Aorta (tissue), 5 donors: ENCODE measurements at regions of chr7 and their contacts with region 1.

Region 1: DNA sequence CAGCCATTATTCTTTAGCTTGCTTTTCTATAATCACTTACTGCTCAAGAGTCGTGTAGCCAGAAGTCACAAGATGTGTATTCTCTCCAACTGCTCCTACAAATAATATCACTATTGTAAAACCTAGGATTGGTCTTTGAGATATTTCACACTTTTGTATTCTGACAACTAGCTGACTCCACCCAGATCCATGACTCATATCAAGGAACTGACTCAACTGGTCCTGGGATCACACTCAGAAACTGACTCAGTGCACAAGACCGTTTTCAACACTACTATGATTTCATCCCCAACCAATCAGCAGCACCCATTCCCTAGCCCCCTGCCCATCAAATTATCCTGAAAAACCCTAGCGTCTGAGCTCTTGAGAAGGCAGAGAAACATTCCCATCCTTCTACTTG is 56.5 kb upstream of the ORC5 start:
- DNase-seq: no peak
- ATAC-seq: no peak
- H3K4me3 ChIP-seq: no peak overlapping the region
- H3K27ac ChIP-seq: no peak overlapping the region
- H3K4me1 ChIP-seq: no peaks in the 10 kb centered on the region
- H3K27me3 ChIP-seq: no peaks in the 10 kb centered on the region

Region 2: GRCh38 chr7:104045183-104045582 is 219.1 kb before region 1 on chr7:
- intact Hi-C with region 1: no loop called
- DNase-seq: no peak
- ATAC-seq: no peak
- H3K4me3 ChIP-seq: no peak overlapping the region
- H3K27ac ChIP-seq: no peak overlapping the region
- H3K4me1 ChIP-seq: no peaks in the 10 kb centered on the region
- H3K27me3 ChIP-seq: no peaks in the 10 kb centered on the region

Region 3: DNA sequence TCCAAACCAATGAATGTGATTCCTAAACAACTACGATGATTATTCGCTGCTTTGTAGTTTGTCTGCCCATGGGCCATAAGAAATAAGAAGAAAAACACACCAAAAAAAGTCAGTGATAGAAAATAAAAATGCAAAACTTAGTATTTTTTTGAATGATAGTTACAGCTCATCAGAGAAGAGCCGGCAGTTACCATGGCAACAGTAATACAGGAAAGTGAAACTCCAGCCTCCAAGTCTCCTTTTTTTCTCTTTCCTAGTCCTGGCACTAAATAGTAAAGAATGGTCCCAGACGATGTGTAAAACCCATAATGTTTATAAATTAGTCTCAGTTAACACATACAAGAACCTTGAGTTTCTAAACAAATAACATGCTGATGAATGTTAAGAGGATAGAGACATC is 42.5 kb after region 1 on chr7:
- intact Hi-C with region 1: loop called in 1 of 2 experiments (anchors 5 kb)
- DNase-seq: no peak
- ATAC-seq: no peak
- H3K4me3 ChIP-seq: no peak overlapping the region
- H3K27ac ChIP-seq: no peak overlapping the region
- H3K4me1 ChIP-seq: no peaks in the 10 kb centered on the region
- H3K27me3 ChIP-seq: no peaks in the 10 kb centered on the region

Region 4: GRCh38 chr7:104469166-104469820 is 205.0 kb after region 1 on chr7:
- intact Hi-C with region 1: no loop called
- DNase-seq: no peak
- ATAC-seq: no peak
- H3K4me3 ChIP-seq: no peak overlapping the region
- H3K27ac ChIP-seq: no peak overlapping the region
- H3K4me1 ChIP-seq: no peaks in the 10 kb centered on the region
- H3K27me3 ChIP-seq: no peaks in the 10 kb centered on the region